ENCODE measurements at regions of chr9 and their contacts with region 1.

Region 1: GRCh38 chr9:36487482-36488388 is 85.0 kb upstream of the MELK start:
- DNase-seq: peak; percentile 92
- H3K4me3 Mint-ChIP-seq: peak overlapping the region; percentile 85
- H3K27ac Mint-ChIP-seq: peak overlapping the region; percentile 98
- H3K4me1 Mint-ChIP-seq: peaks cover 51% of the 10 kb centered on the region
- H3K27me3 Mint-ChIP-seq: no peaks in the 10 kb centered on the region

Region 2: DNA sequence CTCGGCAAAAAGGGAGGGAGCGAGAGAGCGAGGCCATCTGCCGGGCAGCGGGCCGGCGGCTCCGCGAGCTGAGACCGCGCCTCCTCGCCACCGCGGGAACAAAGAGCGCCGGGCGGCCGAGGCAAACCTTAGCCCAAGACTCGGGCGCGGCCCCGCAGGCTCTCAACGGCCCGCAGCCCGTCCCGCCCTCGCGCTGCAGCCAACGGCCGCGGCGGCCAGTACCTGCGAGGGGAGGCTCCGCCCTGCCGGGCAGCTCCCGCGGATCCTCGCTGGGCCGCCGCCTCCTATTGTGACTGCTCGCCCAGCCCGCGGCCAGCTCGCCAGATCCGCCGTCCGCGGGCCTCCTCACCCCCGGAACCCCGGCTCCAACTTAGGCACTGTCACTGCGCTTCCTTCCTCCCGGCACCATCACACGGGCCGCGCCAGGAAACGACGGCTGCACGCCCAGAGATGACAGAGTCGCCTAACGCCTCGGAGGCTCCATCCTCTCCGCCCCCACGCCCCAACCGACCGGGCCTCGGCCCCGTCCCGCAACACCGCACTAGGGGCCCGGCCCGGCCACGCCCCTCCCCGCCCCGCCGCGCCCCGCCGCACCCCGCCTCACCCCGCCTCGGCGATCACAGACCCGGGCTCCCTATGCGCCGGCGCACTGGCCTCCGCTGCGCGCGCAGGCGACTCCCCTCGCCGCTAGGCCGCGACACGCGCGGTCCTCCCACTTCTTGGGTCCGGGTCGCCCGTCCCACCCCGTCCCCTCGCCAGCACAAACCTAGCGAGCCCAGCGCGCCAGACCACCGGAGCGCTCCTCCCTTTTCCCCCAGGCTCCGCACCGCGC is 87.2 kb before region 1 on chr9:
- CTCF ChIA-PET with region 1: no interaction called
- POLR2A ChIA-PET with region 1: interaction called, 17 read pairs
- DNase-seq: peak; percentile 92
- H3K4me3 Mint-ChIP-seq: peak overlapping the region; percentile 88
- H3K27ac Mint-ChIP-seq: peak overlapping the region; percentile 97
- H3K4me1 Mint-ChIP-seq: peaks cover 40% of the 10 kb centered on the region
- H3K27me3 Mint-ChIP-seq: no peaks in the 10 kb centered on the region

Region 3: GRCh38 chr9:36461323-36461722 is 26.4 kb before region 1 on chr9:
- CTCF ChIA-PET with region 1: interaction called, 5 read pairs
- POLR2A ChIA-PET with region 1: interaction called, 73 read pairs
- DNase-seq: no peak
- H3K4me3 Mint-ChIP-seq: no peak overlapping the region
- H3K27ac Mint-ChIP-seq: peak overlapping the region; percentile 65
- H3K4me1 Mint-ChIP-seq: peaks cover 57% of the 10 kb centered on the region
- H3K27me3 Mint-ChIP-seq: no peaks in the 10 kb centered on the region

Region 4: GRCh38 chr9:36470643-36471290 is 17.0 kb before region 1 on chr9:
- CTCF ChIA-PET with region 1: interaction called, 8 read pairs
- POLR2A ChIA-PET with region 1: interaction called, 56 read pairs
- DNase-seq: peak; percentile 73
- H3K4me3 Mint-ChIP-seq: peak overlapping the region; percentile 78
- H3K27ac Mint-ChIP-seq: peak overlapping the region; percentile 87
- H3K4me1 Mint-ChIP-seq: peaks cover 36% of the 10 kb centered on the region
- H3K27me3 Mint-ChIP-seq: no peaks in the 10 kb centered on the region

Region 5: GRCh38 chr9:36501727-36502126 is 14.0 kb after region 1 on chr9:
- CTCF ChIA-PET with region 1: no interaction called
- POLR2A ChIA-PET with region 1: interaction called, 15 read pairs
- DNase-seq: no peak
- H3K4me3 Mint-ChIP-seq: no peak overlapping the region
- H3K27ac Mint-ChIP-seq: no peak overlapping the region
- H3K4me1 Mint-ChIP-seq: peaks cover 16% of the 10 kb centered on the region
- H3K27me3 Mint-ChIP-seq: no peaks in the 10 kb centered on the region